ENCODE measurements at regions of chr7 and their contacts with region 1.

Region 1: GRCh38 chr7:954330-955238 is at the start of gene ADAP1:
- DNase-seq: peak; percentile 47 to 55
- H3K4me3 ChIP-seq: peak within 1 kb of the TSS; percentile 10 to 50 (median 37)
- H3K27ac ChIP-seq: no peak within 1 kb of the TSS
- H3K4me1 ChIP-seq: peaks cover 7 to 14% of the 10 kb centered on the region in 2 donors
- H3K27me3 ChIP-seq: no peaks in the 10 kb centered on the region
- CTCF ChIP-seq: peak in 3 of 6 experiments; percentile 35 to 53 (median 48)
- POLR2A ChIP-seq: no peak
- total RNA-seq, gene ADAP1: 11.7 to 29.9 (median 23.4) TPM

Region 2: DNA sequence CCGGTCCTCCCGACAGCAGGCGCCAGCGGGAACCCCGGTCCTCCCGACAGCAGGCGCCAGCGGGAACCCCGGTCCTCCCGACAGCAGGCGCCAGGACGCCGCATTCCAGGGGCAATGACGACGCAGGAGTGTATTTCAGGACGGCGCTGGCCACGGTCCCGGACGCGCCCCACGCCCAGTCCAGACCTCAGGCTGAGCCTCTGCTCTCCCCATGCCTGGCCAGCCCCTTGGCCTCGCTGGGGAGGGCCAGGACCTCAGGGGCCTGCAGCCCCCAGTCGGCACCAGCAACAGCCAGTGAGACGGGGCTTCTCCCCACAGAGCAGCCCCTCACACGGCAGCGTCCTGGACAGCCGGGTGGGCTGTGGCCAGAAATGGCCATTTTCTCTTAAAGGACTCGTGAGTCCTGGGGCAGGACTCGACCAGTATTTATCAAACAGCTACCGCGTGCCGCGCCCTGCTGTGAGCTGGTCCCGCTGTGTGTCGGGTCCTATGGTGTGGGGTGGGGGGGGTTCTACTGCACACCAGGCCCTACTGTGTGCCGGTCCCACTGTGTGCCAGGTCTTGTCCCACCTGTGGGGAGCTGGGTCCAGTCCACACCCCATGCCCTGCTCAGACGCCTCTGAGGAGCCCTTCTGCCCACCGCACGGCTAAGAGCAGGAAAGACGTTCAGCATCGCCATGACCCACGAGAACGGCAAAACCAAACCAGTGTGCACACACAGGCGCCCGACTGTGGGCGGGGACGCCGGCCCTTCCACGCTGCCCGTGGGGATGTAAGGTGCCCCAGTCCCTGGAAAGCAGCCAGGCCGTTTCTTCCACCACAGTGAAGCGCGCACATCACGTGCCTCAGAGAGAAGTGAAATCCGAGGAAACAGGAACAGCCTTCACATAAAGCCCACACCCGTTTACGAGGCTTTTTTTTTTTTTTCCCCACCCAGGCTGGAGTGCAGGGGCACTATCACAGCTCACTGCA is 44.9 kb before region 1 on chr7:
- intact Hi-C with region 1: loop called (anchors 5 kb)
- DNase-seq: peak; percentile 53 to 75
- H3K4me3 ChIP-seq: no peak overlapping the region
- H3K27ac ChIP-seq: no peak overlapping the region
- H3K4me1 ChIP-seq: peaks cover 6 to 13% of the 10 kb centered on the region in 2 donors
- H3K27me3 ChIP-seq: no peaks in the 10 kb centered on the region
- CTCF ChIP-seq: no peak
- POLR2A ChIP-seq: no peak

Measured in thyroid gland (tissue), 4 donors.